ENCODE measurements at regions of chr1 and their contacts with region 1.

Region 1: DNA sequence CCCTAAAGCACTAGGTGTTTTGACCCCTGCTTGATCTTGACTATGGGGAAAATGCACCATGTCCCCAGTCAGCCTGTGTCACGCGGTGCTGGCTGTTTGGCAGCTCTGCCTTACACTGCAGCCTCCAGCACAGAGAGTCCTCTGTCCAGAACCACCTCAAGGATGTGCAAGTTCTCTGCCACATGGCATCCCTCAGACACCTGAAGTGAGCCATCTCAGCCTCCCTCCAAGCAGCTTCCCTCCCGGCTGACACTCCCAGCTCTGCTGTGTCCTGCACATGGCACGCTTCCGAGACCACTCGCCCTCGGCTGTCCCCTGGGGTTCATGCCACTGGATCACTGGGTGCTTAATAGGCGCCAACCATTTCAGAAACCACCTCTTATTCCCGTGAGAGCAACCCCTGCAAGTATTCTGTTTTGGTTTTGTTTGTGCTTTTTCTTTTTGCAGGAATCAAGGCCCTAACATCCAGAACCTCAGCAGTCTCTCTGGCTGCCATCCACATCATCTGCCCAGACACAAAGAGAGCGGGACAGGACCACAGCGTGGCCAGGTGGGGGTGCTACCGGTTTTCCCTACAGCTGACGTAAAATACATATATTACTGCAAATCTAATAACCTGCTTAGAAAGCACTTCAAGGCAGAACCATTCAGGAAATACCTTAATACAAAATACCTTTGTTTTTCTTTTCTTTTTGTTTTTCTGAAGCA is 45.7 kb downstream of the CAPZB start:
- DNase-seq: no peak
- H3K4me3 Mint-ChIP-seq: no peak overlapping the region
- H3K27ac Mint-ChIP-seq: peak overlapping the region; percentile 38
- H3K4me1 Mint-ChIP-seq: peaks cover 64% of the 10 kb centered on the region
- H3K27me3 Mint-ChIP-seq: no peaks in the 10 kb centered on the region

Region 2: GRCh38 chr1:18875107-18875795 is 564.4 kb before region 1 on chr1:
- intact Hi-C with region 1: no loop called
- DNase-seq: peak; percentile 49
- H3K4me3 Mint-ChIP-seq: no peak overlapping the region
- H3K27ac Mint-ChIP-seq: no peak overlapping the region
- H3K4me1 Mint-ChIP-seq: no peaks in the 10 kb centered on the region
- H3K27me3 Mint-ChIP-seq: no peaks in the 10 kb centered on the region

Region 3: GRCh38 chr1:19462781-19463503 is 23.3 kb after region 1 on chr1:
- intact Hi-C with region 1: no loop called
- DNase-seq: peak; percentile 62
- H3K4me3 Mint-ChIP-seq: peak overlapping the region; percentile 75
- H3K27ac Mint-ChIP-seq: peak overlapping the region; percentile 65
- H3K4me1 Mint-ChIP-seq: peaks cover 77% of the 10 kb centered on the region
- H3K27me3 Mint-ChIP-seq: no peaks in the 10 kb centered on the region

Region 4: DNA sequence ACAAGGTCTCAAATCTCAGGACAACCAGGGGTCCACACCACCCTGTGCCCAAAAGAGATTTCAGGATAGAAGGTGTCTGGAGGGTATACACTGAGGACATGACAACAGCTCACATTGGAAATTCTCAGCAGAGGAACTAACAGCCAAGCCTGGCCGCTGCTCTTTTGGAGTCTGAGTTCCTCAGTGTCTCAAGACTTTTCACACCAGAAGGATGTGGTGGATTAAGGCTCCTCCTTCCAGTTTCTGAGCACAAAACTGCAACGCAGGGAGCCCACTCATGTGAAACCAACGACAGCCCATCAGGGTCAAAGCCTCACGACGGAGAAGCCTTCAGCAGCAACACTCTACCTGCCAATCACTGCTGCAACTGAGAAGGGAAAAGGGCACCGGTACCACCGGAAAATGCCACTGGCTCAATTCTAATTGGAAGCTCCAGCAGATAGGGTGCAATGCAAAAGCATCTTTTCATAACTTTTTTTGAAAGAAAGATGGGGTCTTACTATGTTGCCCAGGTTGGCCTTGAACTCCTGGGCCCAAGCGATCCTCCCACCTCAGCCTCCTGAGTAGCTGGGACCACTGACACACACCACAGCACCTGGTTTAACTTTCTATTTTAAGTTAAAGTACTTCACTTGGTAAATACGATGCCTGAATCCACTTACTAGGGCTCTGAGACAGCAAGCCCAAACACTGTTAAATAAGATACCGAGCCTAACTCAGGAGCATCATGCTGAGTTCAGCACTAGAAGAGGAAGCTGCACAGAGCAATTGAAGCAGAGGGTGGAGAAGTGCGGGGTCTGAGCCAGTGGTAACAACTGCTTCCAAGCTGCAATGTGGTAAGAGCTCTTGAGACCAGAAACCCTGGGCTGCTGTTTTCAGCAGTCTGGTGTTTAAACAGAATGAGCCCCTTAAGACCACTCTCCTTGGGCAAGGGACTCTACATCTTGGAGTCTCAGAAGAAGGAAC is 37.9 kb after region 1 on chr1:
- intact Hi-C with region 1: loop called (anchors 5 kb)
- DNase-seq: no peak
- H3K4me3 Mint-ChIP-seq: peak overlapping the region; percentile 70
- H3K27ac Mint-ChIP-seq: peak overlapping the region; percentile 90
- H3K4me1 Mint-ChIP-seq: peaks cover 84% of the 10 kb centered on the region
- H3K27me3 Mint-ChIP-seq: no peaks in the 10 kb centered on the region

Measured in activated T-helper 2 cell treated with anti-CD3 and anti-CD28 coated beads, Interferon-gamma antibody, Interleukin-2, Interleukin-4, amounts not matched to agents 10 μg/mL and 5 μg/mL and 100 μg/mL, durations not matched to agents 14 hours and 24 hours and 36 hours (primary cell).